Cardiac septum (tissue), 1 donor: ENCODE measurements at regions of chr3 and their contacts with region 1.

Region 1: GRCh38 chr3:187986514-187986934 is 167.4 kb upstream of the LPP start:
- DNase-seq: no peak

Region 2: GRCh38 chr3:187305881-187306280 is 680.6 kb before region 1 on chr3:
- intact Hi-C with region 1: no loop called
- DNase-seq: no peak

Region 3: GRCh38 chr3:187946163-187946691 is 40.3 kb before region 1 on chr3:
- intact Hi-C with region 1: loop called (anchors 2 kb)
- DNase-seq: no peak

Region 4: GRCh38 chr3:188026191-188026968 is 39.9 kb after region 1 on chr3:
- intact Hi-C with region 1: loop called (anchors 5 kb)
- DNase-seq: no peak

Region 5: DNA sequence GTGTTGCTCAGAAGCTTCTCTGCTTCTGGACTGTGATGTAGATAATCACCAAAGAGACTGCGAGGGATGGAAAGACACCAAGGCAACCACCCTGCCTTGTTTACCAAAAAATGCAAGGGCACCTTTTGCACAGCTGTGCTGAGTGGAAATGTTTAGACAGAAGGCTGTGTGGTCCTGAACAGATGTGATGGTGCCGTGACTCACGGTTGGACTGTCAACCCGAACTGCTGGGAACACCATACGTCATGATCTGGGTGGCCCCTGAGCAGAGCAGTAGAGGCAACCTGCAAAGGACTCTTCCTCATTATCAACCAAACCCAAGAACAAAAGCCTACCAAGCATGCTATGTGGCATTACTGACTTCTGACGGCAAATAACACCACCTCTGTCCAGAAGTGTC is 106.1 kb after region 1 on chr3:
- intact Hi-C with region 1: no loop called
- DNase-seq: no peak

Region 6: DNA sequence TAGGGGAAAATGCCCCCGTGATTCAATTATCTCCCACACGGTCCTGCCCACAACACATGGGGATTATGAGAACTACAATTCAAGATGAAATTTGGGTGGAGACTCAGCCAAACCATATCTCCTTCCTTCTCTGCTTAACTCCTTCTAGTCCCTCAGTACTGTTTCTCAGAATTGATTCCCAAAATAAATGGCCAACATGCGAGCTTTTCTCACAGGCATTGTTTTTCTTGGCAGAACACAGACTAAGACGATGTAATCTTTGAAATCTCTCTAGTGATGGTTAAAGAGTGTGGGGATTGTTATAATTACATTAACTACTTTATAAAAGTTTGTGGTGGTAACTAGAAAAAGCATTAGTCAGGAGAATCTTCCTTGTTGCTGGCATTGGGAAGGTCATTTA is 533.9 kb after region 1 on chr3:
- intact Hi-C with region 1: no loop called
- DNase-seq: no peak